ENCODE measurements at regions of chr19 and their contacts with region 1.

Region 1: DNA sequence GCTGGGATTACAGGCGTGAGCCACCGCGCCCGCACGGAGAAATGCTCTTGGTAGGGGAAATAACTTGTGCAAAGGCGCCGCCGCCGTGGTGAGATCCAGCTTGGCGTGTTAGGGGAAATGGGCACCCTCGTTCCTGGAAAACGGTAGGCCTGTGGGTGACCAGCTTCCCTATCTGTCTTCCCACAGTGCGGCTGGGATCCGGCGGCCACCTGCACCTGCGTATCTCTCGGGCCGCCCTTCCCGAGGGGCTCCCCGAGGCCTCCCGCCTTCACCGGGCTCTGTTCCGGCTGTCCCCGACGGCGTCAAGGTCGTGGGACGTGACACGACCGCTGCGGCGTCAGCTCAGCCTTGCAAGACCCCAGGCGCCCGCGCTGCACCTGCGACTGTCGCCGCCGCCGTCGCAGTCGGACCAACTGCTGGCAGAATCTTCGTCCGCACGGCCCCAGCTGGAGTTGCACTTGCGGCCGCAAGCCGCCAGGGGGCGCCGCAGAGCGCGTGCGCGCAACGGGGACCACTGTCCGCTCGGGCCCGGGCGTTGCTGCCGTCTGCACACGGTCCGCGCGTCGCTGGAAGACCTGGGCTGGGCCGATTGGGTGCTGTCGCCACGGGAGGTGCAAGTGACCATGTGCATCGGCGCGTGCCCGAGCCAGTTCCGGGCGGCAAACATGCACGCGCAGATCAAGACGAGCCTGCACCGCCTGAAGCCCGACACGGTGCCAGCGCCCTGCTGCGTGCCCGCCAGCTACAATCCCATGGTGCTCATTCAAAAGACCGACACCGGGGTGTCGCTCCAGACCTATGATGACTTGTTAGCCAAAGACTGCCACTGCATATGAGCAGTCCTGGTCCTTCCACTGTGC is 2.4 kb downstream of the GDF15 start:
- H3K4me3 Mint-ChIP-seq: peak overlapping the region; percentile 80
- H3K27ac Mint-ChIP-seq: peak overlapping the region; percentile 86
- H3K4me1 Mint-ChIP-seq: peaks cover 75% of the 10 kb centered on the region
- H3K27me3 Mint-ChIP-seq: peaks cover 17% of the 10 kb centered on the region

Region 2: GRCh38 chr19:18349524-18350128 is 38.7 kb before region 1 on chr19:
- intact Hi-C with region 1: loop called (anchors 5 kb)
- H3K4me3 Mint-ChIP-seq: no peak overlapping the region
- H3K27ac Mint-ChIP-seq: no peak overlapping the region
- H3K4me1 Mint-ChIP-seq: peaks cover 24% of the 10 kb centered on the region
- H3K27me3 Mint-ChIP-seq: no peaks in the 10 kb centered on the region

Region 3: GRCh38 chr19:18401580-18402112 is 13.3 kb after region 1 on chr19:
- intact Hi-C with region 1: loop called (anchors 1 kb)
- H3K4me3 Mint-ChIP-seq: peak overlapping the region; percentile 62
- H3K27ac Mint-ChIP-seq: peak overlapping the region; percentile 90
- H3K4me1 Mint-ChIP-seq: peaks cover 60% of the 10 kb centered on the region
- H3K27me3 Mint-ChIP-seq: no peaks in the 10 kb centered on the region

Region 4: DNA sequence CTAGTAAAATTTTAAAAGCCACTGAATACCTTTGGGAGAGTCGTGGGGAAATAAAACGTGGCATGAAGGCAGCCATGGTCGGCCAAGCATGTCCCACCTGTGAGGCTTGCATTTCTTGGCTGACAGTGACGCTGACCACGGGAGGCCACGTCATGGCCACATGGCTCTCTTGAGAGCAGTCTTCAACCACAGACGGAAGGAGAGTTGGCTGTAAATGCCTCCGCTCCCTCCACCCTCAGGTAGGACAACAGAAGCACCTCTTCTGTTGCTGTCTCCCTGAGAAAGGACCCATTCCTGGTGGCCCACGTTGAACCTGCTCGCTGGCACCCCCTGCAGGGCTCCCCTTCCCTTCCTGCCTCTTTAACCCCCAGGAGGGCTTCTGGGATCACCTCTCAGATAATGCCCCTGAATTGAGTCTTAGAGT is 19.7 kb after region 1 on chr19:
- intact Hi-C with region 1: loop called (anchors 2 kb)
- H3K4me3 Mint-ChIP-seq: no peak overlapping the region
- H3K27ac Mint-ChIP-seq: no peak overlapping the region
- H3K4me1 Mint-ChIP-seq: peaks cover 27% of the 10 kb centered on the region
- H3K27me3 Mint-ChIP-seq: peaks cover 14% of the 10 kb centered on the region

Measured in dendritic cell treated with granulocyte-macrophage colony-stimulating factor and Interleukin-4, amounts not matched to agents 40 ng/mL and 50 ng/mL, for 4 days (primary cell).